ENCODE measurements at regions of chr18 and their contacts with region 1.

Region 1: GRCh38 chr18:3593904-3594661 is 144.1 kb downstream of the TGIF1 start:
- DNase-seq: peak; percentile 77 to 95 (median 93)
- H3K4me3 ChIP-seq: peak overlapping the region; percentile 74
- H3K4me3 Mint-ChIP-seq: peak overlapping the region; percentile 94 to 98 (median 95)
- H3K27ac ChIP-seq: peak overlapping the region; percentile 95
- H3K27ac Mint-ChIP-seq: peak overlapping the region; percentile 97 to 100 (median 99)
- H3K4me1 ChIP-seq: peaks cover 41% of the 10 kb centered on the region
- H3K4me1 Mint-ChIP-seq: peaks cover 49 to 64% (median 54%) of the 10 kb centered on the region in 3 donors
- H3K27me3 ChIP-seq: no peaks in the 10 kb centered on the region
- H3K27me3 Mint-ChIP-seq: no peaks in the 10 kb centered on the region

Region 2: DNA sequence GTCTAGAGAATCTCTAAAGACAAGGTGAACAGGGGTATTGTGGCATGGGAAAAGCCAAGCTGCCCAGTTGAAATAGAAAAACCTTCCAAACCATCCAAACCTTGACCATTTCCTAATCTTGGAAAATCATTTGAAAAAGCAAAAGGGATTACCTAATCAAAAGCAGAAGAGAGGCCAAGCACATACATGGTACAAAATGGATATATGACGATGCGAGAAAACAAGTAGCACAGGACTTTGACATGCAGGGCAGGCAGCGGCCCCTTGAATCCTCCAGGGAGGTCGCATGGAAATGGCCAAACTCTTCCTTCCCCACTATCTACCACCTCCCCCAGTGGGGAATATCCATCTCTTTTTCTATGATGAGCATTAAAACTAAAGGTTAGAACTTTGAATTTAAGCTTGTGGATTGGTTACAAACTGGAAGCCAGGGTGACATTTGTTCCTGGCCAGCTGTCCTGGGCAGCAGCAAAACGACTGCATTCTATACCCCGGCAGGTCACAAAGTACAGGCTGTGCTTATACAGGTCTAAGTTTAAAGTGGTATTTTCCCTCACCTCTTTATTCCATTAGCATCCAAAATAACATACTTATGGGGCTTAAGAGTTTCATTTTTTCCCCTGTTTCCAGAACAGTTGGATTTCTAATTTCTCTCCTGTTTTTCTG is 399.0 kb before region 1 on chr18:
- CTCF ChIA-PET with region 1: no interaction called
- POLR2A ChIA-PET with region 1: no interaction called
- DNase-seq: no peak
- H3K4me3 ChIP-seq: no peak overlapping the region
- H3K4me3 Mint-ChIP-seq: no peak overlapping the region
- H3K27ac ChIP-seq: no peak overlapping the region
- H3K27ac Mint-ChIP-seq: no peak overlapping the region
- H3K4me1 ChIP-seq: no peaks in the 10 kb centered on the region
- H3K4me1 Mint-ChIP-seq: peaks cover 0 to 2% (median 0%) of the 10 kb centered on the region in 3 donors
- H3K27me3 ChIP-seq: no peaks in the 10 kb centered on the region
- H3K27me3 Mint-ChIP-seq: peaks cover 0 to 10% of the 10 kb centered on the region in 2 donors

Region 3: DNA sequence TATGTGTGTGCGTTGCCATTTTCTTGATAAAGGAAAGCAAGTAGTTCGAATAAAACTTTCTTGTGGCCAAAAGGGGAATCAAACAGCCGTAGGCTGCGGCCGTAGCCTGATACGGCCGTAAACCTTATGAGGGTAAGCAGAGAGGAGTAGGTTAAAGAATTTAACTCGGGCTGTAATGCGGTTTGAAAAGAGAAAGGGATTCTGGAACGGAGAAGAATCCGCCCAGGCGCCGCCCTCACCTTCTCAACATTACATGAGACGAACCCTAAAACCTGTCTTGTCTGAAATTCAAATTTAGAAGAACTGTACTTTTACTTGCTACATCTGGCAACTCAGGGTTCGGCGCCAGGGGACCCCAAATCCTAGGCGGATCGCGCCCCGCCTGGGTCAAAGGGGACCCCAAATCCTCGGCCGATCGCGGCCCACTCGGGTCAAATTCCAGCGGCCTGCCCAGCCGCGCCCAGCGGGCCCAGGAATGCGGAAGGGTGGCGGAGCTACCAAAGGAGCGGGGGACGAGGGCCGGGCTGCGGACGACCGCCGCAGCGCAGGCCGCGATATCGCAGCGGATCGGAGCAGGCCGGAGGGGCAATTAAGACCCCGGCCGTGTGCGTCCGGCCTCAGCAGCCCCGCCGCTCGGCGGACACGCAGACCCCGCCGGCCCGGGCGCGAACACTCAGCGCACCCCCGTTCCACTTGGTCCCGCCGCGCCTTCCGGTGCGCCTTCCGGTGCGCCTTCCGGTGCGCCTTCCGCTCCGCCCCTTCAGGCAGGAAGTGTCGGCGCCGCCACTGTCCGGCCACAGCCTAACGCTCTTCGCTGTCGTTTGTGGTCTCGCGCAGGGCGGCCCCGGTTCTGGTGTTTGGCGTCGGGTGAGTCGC is 332.5 kb before region 1 on chr18 and contains the start of gene MYL12B:
- CTCF ChIA-PET with region 1: interaction called, 4 read pairs
- POLR2A ChIA-PET with region 1: interaction called, 11 read pairs
- DNase-seq: peak; percentile 81 to 91 (median 85)
- H3K4me3 ChIP-seq: peak within 1 kb of the TSS; percentile 82
- H3K4me3 Mint-ChIP-seq: peak within 1 kb of the TSS; percentile 90 to 99 (median 98)
- H3K27ac ChIP-seq: peak within 1 kb of the TSS; percentile 95
- H3K27ac Mint-ChIP-seq: peak within 1 kb of the TSS; percentile 96 to 100 (median 100)
- H3K4me1 ChIP-seq: peaks cover 77% of the 10 kb centered on the region
- H3K4me1 Mint-ChIP-seq: peaks cover 67 to 88% (median 86%) of the 10 kb centered on the region in 3 donors
- H3K27me3 ChIP-seq: no peaks in the 10 kb centered on the region
- H3K27me3 Mint-ChIP-seq: no peaks in the 10 kb centered on the region
- total RNA-seq, gene MYL12B: 251 to 252 TPM

Region 4: DNA sequence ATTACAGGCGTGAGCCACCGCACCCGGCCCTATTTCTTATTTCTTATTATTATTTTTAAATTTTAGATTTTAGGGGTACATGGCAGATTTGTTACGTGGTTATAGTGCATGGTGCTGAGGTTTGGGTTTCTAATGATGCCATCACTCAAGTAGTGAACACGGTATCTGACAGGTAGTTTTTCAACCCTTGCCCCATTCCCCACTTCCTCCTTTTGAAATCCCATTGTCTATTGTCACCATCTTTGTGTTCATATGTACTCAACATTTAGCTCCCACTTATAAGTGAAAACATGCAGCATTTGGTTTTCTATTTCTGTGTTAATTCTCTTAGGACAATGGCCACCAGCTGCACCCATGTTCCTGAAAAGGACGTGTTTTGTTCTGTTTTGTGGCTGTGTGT is 104.6 kb before region 1 on chr18:
- CTCF ChIA-PET with region 1: no interaction called
- POLR2A ChIA-PET with region 1: no interaction called
- DNase-seq: no peak
- H3K4me3 ChIP-seq: no peak overlapping the region
- H3K4me3 Mint-ChIP-seq: no peak overlapping the region
- H3K27ac ChIP-seq: no peak overlapping the region
- H3K27ac Mint-ChIP-seq: no peak overlapping the region
- H3K4me1 ChIP-seq: no peaks in the 10 kb centered on the region
- H3K4me1 Mint-ChIP-seq: peaks cover 0 to 6% (median 0%) of the 10 kb centered on the region in 3 donors
- H3K27me3 ChIP-seq: no peaks in the 10 kb centered on the region
- H3K27me3 Mint-ChIP-seq: peaks cover 4 to 15% of the 10 kb centered on the region in 2 donors

Region 5: GRCh38 chr18:3554091-3554601 is 39.9 kb before region 1 on chr18:
- CTCF ChIA-PET with region 1: no interaction called
- POLR2A ChIA-PET with region 1: no interaction called
- DNase-seq: no peak
- H3K4me3 ChIP-seq: no peak overlapping the region
- H3K4me3 Mint-ChIP-seq: no peak overlapping the region
- H3K27ac ChIP-seq: no peak overlapping the region
- H3K27ac Mint-ChIP-seq: no peak overlapping the region
- H3K4me1 ChIP-seq: no peaks in the 10 kb centered on the region
- H3K4me1 Mint-ChIP-seq: no peaks in the 10 kb centered on the region
- H3K27me3 ChIP-seq: no peaks in the 10 kb centered on the region
- H3K27me3 Mint-ChIP-seq: peaks cover 0 to 2% of the 10 kb centered on the region in 2 donors

Region 6: GRCh38 chr18:3604498-3605408 is 10.7 kb after region 1 on chr18:
- CTCF ChIA-PET with region 1: interaction called, 41 read pairs
- POLR2A ChIA-PET with region 1: interaction called, 56 read pairs
- DNase-seq: peak in 2 of 5 donors; percentile 38 to 48
- H3K4me3 ChIP-seq: peak overlapping the region; percentile 57
- H3K4me3 Mint-ChIP-seq: no peak overlapping the region
- H3K27ac ChIP-seq: peak overlapping the region; percentile 94
- H3K27ac Mint-ChIP-seq: no peak overlapping the region
- H3K4me1 ChIP-seq: peaks cover 44% of the 10 kb centered on the region
- H3K4me1 Mint-ChIP-seq: peaks cover 13 to 15% (median 15%) of the 10 kb centered on the region in 3 donors
- H3K27me3 ChIP-seq: no peaks in the 10 kb centered on the region
- H3K27me3 Mint-ChIP-seq: no peaks in the 10 kb centered on the region

Region 7: GRCh38 chr18:3857544-3857943 is 263.5 kb after region 1 on chr18:
- CTCF ChIA-PET with region 1: no interaction called
- POLR2A ChIA-PET with region 1: no interaction called
- DNase-seq: no peak
- H3K4me3 ChIP-seq: no peak overlapping the region
- H3K4me3 Mint-ChIP-seq: no peak overlapping the region
- H3K27ac ChIP-seq: no peak overlapping the region
- H3K27ac Mint-ChIP-seq: no peak overlapping the region
- H3K4me1 ChIP-seq: no peaks in the 10 kb centered on the region
- H3K4me1 Mint-ChIP-seq: no peaks in the 10 kb centered on the region
- H3K27me3 ChIP-seq: no peaks in the 10 kb centered on the region
- H3K27me3 Mint-ChIP-seq: peaks cover 0 to 8% of the 10 kb centered on the region in 2 donors

Measured in CD8-positive, alpha-beta memory T cell (primary cell).